Left lung (tissue), 14 donors: ENCODE measurements at regions of chr9 and their contacts with region 1.

Region 1: DNA sequence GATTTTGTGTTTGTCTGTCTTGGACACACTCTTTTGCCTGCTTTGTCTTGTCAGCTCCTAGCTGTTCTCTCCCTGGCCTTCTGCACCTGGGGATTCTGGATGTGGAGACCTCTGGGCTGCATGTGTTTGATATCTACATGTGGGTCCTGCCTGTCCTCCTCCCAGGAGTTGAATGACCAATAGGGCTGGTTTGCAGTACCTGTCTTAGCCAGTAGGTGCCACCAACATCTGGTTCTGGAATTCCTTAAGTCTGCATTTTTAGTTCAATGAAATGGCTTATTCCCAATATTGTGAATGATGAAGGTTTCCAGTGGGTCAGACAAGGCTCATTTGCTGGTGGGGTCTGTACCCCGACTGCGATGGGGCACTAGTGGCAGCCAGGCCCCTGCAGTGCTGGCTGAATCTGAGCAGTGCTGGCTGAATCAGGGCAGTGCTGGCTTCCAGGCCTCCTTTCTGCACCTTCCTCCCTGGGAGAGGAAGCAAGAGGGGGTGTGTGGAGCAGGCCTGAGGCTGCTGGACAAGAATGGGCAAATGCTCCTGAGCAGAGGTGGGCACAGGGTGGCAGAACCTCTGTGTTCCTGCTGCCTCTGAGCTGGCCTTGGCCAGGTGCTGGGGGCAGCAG is 73.3 kb downstream of the RXRA start:
- DNase-seq: no peak
- ATAC-seq: no peak
- H3K4me3 ChIP-seq: no peak overlapping the region
- H3K27ac ChIP-seq: peak overlapping the region in 1 of 2 donors; percentile 75
- H3K4me1 ChIP-seq: peaks cover 46 to 99% of the 10 kb centered on the region in 2 donors
- H3K27me3 ChIP-seq: no peaks in the 10 kb centered on the region
- CTCF ChIP-seq: peak; percentile 40 to 89

Region 2: DNA sequence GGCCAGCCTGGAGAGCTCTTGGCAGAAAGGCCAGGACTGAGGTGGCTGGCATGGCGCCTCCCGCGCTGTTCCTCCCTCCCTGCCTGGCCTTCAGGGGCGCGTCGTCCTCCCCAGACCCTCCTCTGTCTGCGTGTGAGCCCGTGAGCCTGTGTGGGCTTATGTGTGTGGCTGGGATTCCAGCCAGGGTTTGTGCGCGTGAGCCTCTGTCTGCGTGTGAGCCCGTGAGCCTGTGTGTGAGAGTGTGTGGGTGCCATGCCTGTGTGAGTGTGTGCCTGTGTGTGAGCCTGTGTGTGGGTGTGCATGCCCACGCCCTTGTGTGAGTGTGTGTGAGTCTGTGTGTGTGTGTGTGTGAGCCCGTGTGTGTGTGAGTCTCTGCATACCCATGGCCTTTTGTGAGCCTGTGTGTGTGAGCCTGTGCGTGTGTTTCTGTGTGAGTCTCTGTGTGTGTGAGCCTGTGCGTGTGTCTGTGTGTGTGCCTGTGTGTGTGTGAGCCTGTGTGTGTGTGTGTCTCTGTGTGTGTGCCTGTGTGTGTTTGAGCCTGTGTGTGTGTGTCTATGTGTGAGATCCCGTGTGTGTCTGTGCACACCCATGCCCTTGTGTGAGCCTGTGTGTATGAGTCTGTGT is 60.3 kb before region 1 on chr9:
- intact Hi-C with region 1: loop called in 1 of 2 experiments (anchors 10 kb)
- DNase-seq: no peak
- ATAC-seq: peak; percentile 4
- H3K4me3 ChIP-seq: no peak overlapping the region
- H3K27ac ChIP-seq: no peak overlapping the region
- H3K4me1 ChIP-seq: peaks cover 62 to 100% of the 10 kb centered on the region in 2 donors
- H3K27me3 ChIP-seq: no peaks in the 10 kb centered on the region
- CTCF ChIP-seq: no peak